Right ventricle myocardium superior (tissue), 1 donor: ENCODE measurements at regions of chr9 and their contacts with region 1.

Region 1: GRCh38 chr9:18910916-18911315 is 122.1 kb downstream of the SAXO1 start:
- DNase-seq: no peak
- ATAC-seq: no peak

Region 2: GRCh38 chr9:18942801-18943200 is 31.9 kb after region 1 on chr9:
- intact Hi-C with region 1: no loop called
- DNase-seq: no peak
- ATAC-seq: no peak

Region 3: GRCh38 chr9:18969128-18969527 is 58.2 kb after region 1 on chr9:
- intact Hi-C with region 1: loop called (anchors 10 kb)
- DNase-seq: no peak
- ATAC-seq: peak; percentile 61